Activated B cell treated with CpG ODN at 0.5 μM for 24 hours (primary cell): ENCODE measurements at regions of chr10 and their contacts with region 1.

Region 1: GRCh38 chr10:74947781-74948401 is 121.5 kb downstream of the KAT6B start:
- DNase-seq: no peak
- ATAC-seq: no peak
- H3K4me3 Mint-ChIP-seq: no peak overlapping the region
- H3K27ac Mint-ChIP-seq: no peak overlapping the region
- H3K4me1 Mint-ChIP-seq: peaks cover 16% of the 10 kb centered on the region
- H3K27me3 Mint-ChIP-seq: no peaks in the 10 kb centered on the region
- CTCF ChIP-seq: no peak

Region 2: GRCh38 chr10:74929197-74929596 is 18.7 kb before region 1 on chr10:
- CTCF ChIA-PET with region 1: no interaction called
- POLR2A ChIA-PET with region 1: no interaction called
- intact Hi-C with region 1: loop called (anchors 2 kb)
- DNase-seq: no peak
- ATAC-seq: no peak
- H3K4me3 Mint-ChIP-seq: no peak overlapping the region
- H3K27ac Mint-ChIP-seq: no peak overlapping the region
- H3K4me1 Mint-ChIP-seq: peaks cover 3% of the 10 kb centered on the region
- H3K27me3 Mint-ChIP-seq: no peaks in the 10 kb centered on the region
- CTCF ChIP-seq: no peak